Astrocyte of the spinal cord (primary cell): ENCODE measurements at regions of chr9 and their contacts with region 1.

Region 1: GRCh38 chr9:122350638-122351355 is 20.0 kb upstream of the PTGS1 start:
- DNase-seq: peak; percentile 67
- H3K4me3 ChIP-seq: no peak overlapping the region
- CTCF ChIP-seq: peak; percentile 94

Region 2: GRCh38 chr9:122125158-122125508 is 225.7 kb before region 1 on chr9:
- in situ Hi-C with region 1: loop called (anchors 10 kb)
- DNase-seq: peak; percentile 75
- H3K4me3 ChIP-seq: no peak overlapping the region
- CTCF ChIP-seq: peak; percentile 96

Region 3: GRCh38 chr9:122797316-122798063 is 446.7 kb after region 1 on chr9:
- in situ Hi-C with region 1: no loop called
- DNase-seq: no peak
- H3K4me3 ChIP-seq: no peak overlapping the region
- CTCF ChIP-seq: no peak